ENCODE measurements at regions of chr3 and their contacts with region 1.

Region 1: GRCh38 chr3:138834359-138835212 is at the start of gene PIK3CB:
- DNase-seq: peak; percentile 80 to 92 (median 90)
- ATAC-seq: peak; percentile 93
- H3K4me3 ChIP-seq: peak within 1 kb of the TSS; percentile 90
- H3K4me3 Mint-ChIP-seq: peak within 1 kb of the TSS; percentile 84 to 100 (median 96)
- H3K27ac ChIP-seq: peak within 1 kb of the TSS; percentile 80
- H3K27ac Mint-ChIP-seq: peak within 1 kb of the TSS; percentile 90 to 100 (median 99)
- H3K4me1 ChIP-seq: peaks cover 16 to 21% of the 10 kb centered on the region in 2 donors
- H3K4me1 Mint-ChIP-seq: peaks cover 19 to 36% (median 26%) of the 10 kb centered on the region in 7 donors
- H3K27me3 ChIP-seq: no peaks in the 10 kb centered on the region
- H3K27me3 Mint-ChIP-seq: no peaks in the 10 kb centered on the region
- total RNA-seq, gene PIK3CB: 22.2 to 46.9 (median 38.3) TPM

Region 2: DNA sequence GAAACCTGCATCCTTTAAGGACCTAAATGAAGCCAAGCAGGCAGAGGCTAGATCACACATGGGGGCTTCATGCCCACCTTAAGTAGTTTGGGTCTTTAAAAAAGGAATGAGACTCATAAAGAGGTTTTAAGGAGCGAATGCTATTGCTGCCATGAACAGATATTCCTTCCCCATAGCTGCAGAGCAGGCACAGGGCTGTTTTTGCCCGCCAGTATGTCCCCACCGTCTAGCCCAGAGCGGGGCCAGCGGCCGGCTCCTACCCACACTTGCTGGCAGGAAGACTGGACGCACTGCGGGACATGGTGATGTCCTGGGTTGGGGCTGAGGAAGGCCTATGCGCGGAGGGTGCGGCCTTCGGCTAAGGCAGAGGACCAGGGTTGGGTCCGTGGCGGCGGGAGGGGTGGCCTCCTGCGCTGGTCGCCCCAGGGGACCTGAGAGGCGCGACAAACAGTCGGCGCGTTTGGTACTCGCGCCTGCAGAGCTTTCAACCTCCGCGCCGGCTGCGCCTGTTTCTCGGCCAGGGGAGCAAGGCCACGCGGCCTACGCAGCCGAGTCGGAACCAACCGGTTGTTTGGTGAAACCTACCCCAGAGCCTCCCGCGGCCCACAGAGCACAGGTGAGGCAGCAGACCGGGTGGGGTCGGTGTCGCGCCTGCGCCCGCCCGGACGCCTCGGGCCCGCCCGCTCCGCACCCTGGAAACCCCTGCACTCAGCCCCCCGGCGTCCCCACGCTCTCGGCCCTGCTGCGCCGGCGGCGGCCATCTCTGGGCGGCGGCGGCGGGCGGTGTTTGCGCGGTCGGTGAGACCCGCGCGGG is 226.1 kb before region 1 on chr3 and contains the start of gene FAIM:
- CTCF ChIA-PET with region 1: no interaction called
- POLR2A ChIA-PET with region 1: no interaction called
- intact Hi-C with region 1: loop called in 1 of 2 experiments (anchors 1 kb)
- DNase-seq: peak; percentile 54 to 82 (median 77)
- ATAC-seq: peak; percentile 84
- H3K4me3 ChIP-seq: peak within 1 kb of the TSS; percentile 81
- H3K4me3 Mint-ChIP-seq: peak within 1 kb of the TSS; percentile 84 to 96 (median 91)
- H3K27ac ChIP-seq: peak within 1 kb of the TSS; percentile 90
- H3K27ac Mint-ChIP-seq: peak within 1 kb of the TSS; percentile 84 to 100 (median 98)
- H3K4me1 ChIP-seq: peaks cover 14 to 15% of the 10 kb centered on the region in 2 donors
- H3K4me1 Mint-ChIP-seq: peaks cover 6 to 21% (median 18%) of the 10 kb centered on the region in 7 donors
- H3K27me3 ChIP-seq: no peaks in the 10 kb centered on the region
- H3K27me3 Mint-ChIP-seq: peaks cover 0 to 3% (median 0%) of the 10 kb centered on the region in 5 donors
- total RNA-seq, gene FAIM: 1.6 to 3.3 (median 2.6) TPM

Region 3: DNA sequence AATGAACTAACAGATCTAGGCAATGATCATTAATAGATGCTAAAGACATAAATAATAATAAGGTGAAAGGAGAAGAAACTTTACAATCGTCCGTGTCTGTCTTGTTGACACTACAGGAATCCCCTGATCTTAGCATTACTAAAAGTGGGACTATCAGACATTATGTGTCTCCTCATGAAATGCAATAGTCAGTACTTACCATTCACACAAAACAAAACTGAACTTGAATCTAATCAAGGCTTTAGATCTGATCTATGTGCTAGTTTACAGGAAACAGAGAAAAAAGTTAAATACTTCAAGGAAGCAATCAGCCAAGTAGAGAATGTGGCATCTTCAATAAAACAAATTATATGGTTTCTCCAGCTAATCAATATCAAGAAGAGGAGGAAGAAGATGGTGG is 73.6 kb before region 1 on chr3:
- CTCF ChIA-PET with region 1: no interaction called
- POLR2A ChIA-PET with region 1: no interaction called
- intact Hi-C with region 1: loop called in 1 of 2 experiments (anchors 5 kb)
- DNase-seq: no peak
- ATAC-seq: no peak
- H3K4me3 ChIP-seq: no peak overlapping the region
- H3K4me3 Mint-ChIP-seq: peak overlapping the region in 3 of 10 donors; percentile 8 to 39 (median 37)
- H3K27ac ChIP-seq: no peak overlapping the region
- H3K27ac Mint-ChIP-seq: peak overlapping the region in 5 of 9 donors; percentile 13 to 78 (median 62)
- H3K4me1 ChIP-seq: no peaks in the 10 kb centered on the region
- H3K4me1 Mint-ChIP-seq: peaks cover 18 to 48% (median 34%) of the 10 kb centered on the region in 7 donors
- H3K27me3 ChIP-seq: no peaks in the 10 kb centered on the region
- H3K27me3 Mint-ChIP-seq: no peaks in the 10 kb centered on the region

Region 4: DNA sequence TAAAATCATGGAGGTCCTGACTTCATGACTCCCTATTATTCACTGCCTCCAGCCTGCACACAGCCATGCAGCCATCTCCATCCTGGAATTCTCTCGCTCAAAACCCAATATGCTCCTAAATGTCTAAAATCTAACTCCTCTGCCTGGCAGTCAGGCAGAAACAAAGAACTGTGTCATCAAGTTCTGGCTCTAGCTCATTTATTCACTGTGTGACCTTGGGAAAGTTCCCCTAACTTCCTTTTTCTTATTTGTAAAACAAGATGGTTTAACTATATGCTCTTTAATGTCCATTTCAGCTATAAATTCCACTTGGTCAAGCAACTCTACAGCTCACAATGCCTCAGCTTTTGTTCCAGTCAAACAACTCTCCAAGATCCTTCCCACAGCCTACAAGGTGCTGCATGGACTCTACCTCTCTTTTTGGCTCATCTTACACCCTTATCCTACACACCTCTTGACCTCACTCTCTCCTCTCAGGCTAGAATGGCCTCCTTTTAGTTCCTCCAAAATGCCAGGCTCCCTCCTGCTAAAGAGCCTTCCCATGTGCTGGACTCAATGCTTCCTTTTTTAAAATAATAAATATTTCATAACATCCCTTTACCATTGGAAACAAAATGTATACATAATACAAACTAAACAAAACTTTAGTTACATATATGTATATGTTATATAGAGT is 16.3 kb before region 1 on chr3:
- CTCF ChIA-PET with region 1: interaction called, 3 read pairs
- POLR2A ChIA-PET with region 1: interaction called, 3 read pairs
- intact Hi-C with region 1: loop called in 1 of 2 experiments (anchors 1 kb)
- DNase-seq: no peak
- ATAC-seq: peak; percentile 26
- H3K4me3 ChIP-seq: no peak overlapping the region
- H3K4me3 Mint-ChIP-seq: peak overlapping the region in 4 of 10 donors; percentile 5 to 39 (median 28)
- H3K27ac ChIP-seq: no peak overlapping the region
- H3K27ac Mint-ChIP-seq: peak overlapping the region in 6 of 9 donors; percentile 35 to 84 (median 64)
- H3K4me1 ChIP-seq: peaks cover 12 to 15% of the 10 kb centered on the region in 2 donors
- H3K4me1 Mint-ChIP-seq: peaks cover 22 to 61% (median 50%) of the 10 kb centered on the region in 7 donors
- H3K27me3 ChIP-seq: no peaks in the 10 kb centered on the region
- H3K27me3 Mint-ChIP-seq: no peaks in the 10 kb centered on the region

Region 5: GRCh38 chr3:139389458-139390209 is 555.0 kb after region 1 on chr3 and contains the start of gene COPB2:
- CTCF ChIA-PET with region 1: no interaction called
- POLR2A ChIA-PET with region 1: no interaction called
- intact Hi-C with region 1: loop called in 1 of 2 experiments (anchors 2 kb)
- DNase-seq: peak; percentile 84 to 97 (median 87)
- ATAC-seq: peak; percentile 97
- H3K4me3 ChIP-seq: peak within 1 kb of the TSS; percentile 91
- H3K4me3 Mint-ChIP-seq: peak within 1 kb of the TSS; percentile 87 to 100 (median 99)
- H3K27ac ChIP-seq: peak within 1 kb of the TSS; percentile 93
- H3K27ac Mint-ChIP-seq: peak within 1 kb of the TSS; percentile 97 to 100 (median 99)
- H3K4me1 ChIP-seq: peaks cover 5 to 13% of the 10 kb centered on the region in 2 donors
- H3K4me1 Mint-ChIP-seq: peaks cover 34 to 70% (median 60%) of the 10 kb centered on the region in 7 donors
- H3K27me3 ChIP-seq: no peaks in the 10 kb centered on the region
- H3K27me3 Mint-ChIP-seq: peaks cover 0 to 13% (median 0%) of the 10 kb centered on the region in 5 donors
- total RNA-seq, gene COPB2: 23.5 to 109 (median 64.5) TPM

Measured in naive thymus-derived CD4-positive, alpha-beta T cell (primary cell).